GM12878 (cell line): ENCODE measurements at regions of chr9 and their contacts with region 1.

Region 1: DNA sequence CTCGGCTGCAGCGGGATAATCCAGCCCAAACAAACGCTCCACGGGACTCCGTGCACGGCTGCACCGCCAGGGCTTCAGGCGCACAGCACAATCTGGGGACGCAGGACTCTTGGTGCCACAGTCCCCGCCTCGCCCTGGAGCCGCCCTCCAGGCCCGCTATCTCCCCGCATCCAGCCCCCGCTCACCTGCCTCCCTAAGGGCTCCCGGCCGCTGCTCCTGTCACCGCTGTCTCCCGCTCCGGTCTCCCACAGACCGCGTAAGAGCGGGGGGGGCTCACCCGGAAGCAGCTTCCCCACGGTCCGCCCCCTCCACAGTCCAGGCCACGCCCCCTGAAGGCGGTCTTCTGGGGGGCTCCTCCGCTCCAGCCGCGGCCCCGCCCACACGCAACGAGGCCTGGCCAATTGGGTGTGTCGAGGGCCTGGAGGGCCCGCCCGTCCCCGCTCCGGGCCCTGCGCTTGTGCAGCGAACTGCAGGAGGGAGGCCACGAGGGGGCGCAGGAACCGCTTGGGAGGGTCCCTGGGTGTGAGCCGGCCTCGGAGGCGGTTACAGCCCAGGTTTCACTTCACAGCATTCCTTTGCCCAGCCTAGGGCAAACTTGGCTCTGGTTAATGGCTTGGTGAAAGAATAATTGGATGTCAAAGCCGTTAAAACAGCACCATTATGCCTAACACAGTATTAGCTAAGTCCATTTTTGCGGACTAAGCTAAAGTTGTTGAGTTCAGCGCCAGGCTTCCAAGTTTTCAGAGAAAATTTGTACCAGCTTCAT is at the start of gene ALAD:
- DNase-seq: peak; percentile 87
- ATAC-seq: peak; percentile 100
- H3K4me3 ChIP-seq: peak within 1 kb of the TSS; percentile 86
- H3K27ac ChIP-seq: no peak within 1 kb of the TSS
- H3K4me1 ChIP-seq: no peaks in the 10 kb centered on the region
- H3K27me3 ChIP-seq: no peaks in the 10 kb centered on the region
- CTCF ChIP-seq: peak; percentile 95 to 99 (median 96)
- EP300 ChIP-seq: no peak
- POLR2A ChIP-seq: peak; percentile 80
- RAD21 ChIP-seq: peak; percentile 68
- polyA plus RNA-seq, gene ALAD: 2.4 to 3.9 TPM

Region 2: GRCh38 chr9:112233768-112234167 is 1167.4 kb before region 1 on chr9:
- CTCF ChIA-PET with region 1: no interaction called
- POLR2A ChIA-PET with region 1: no interaction called
- RAD21 ChIA-PET with region 1: no interaction called
- SMC1A ChIA-PET with region 1: no interaction called
- in situ Hi-C with region 1: no loop called
- intact Hi-C with region 1: no loop called
- DNase-seq: no peak
- ATAC-seq: no peak
- H3K4me3 ChIP-seq: no peak overlapping the region
- H3K27ac ChIP-seq: no peak overlapping the region
- H3K4me1 ChIP-seq: no peaks in the 10 kb centered on the region
- H3K27me3 ChIP-seq: no peaks in the 10 kb centered on the region
- CTCF ChIP-seq: no peak
- EP300 ChIP-seq: no peak
- POLR2A ChIP-seq: no peak
- RAD21 ChIP-seq: no peak

Region 3: GRCh38 chr9:113309204-113309813 is 91.9 kb before region 1 on chr9:
- CTCF ChIA-PET with region 1: interaction called, 18 read pairs
- POLR2A ChIA-PET with region 1: no interaction called
- RAD21 ChIA-PET with region 1: interaction called, 5 read pairs
- SMC1A ChIA-PET with region 1: interaction called, 14 read pairs
- in situ Hi-C with region 1: no loop called
- intact Hi-C with region 1: no loop called
- DNase-seq: no peak
- ATAC-seq: peak; percentile 65
- H3K4me3 ChIP-seq: no peak overlapping the region
- H3K27ac ChIP-seq: no peak overlapping the region
- H3K4me1 ChIP-seq: no peaks in the 10 kb centered on the region
- H3K27me3 ChIP-seq: no peaks in the 10 kb centered on the region
- CTCF ChIP-seq: peak; percentile 56 to 73 (median 62); a peak in 5 of 6 replicates
- EP300 ChIP-seq: no peak
- POLR2A ChIP-seq: no peak
- RAD21 ChIP-seq: peak; percentile 91

Region 4: GRCh38 chr9:113355040-113355596 is 46.1 kb before region 1 on chr9:
- CTCF ChIA-PET with region 1: interaction called, 18 read pairs
- POLR2A ChIA-PET with region 1: no interaction called
- RAD21 ChIA-PET with region 1: interaction called, 4 read pairs
- SMC1A ChIA-PET with region 1: interaction called, 7 read pairs
- in situ Hi-C with region 1: no loop called
- intact Hi-C with region 1: no loop called
- DNase-seq: no peak
- ATAC-seq: peak; percentile 55
- H3K4me3 ChIP-seq: no peak overlapping the region
- H3K27ac ChIP-seq: no peak overlapping the region
- H3K4me1 ChIP-seq: peaks cover 14% of the 10 kb centered on the region
- H3K27me3 ChIP-seq: no peaks in the 10 kb centered on the region; a peak in 1 of 4 replicates
- CTCF ChIP-seq: peak; percentile 28 to 46 (median 45); a peak in 4 of 6 replicates
- EP300 ChIP-seq: no peak
- POLR2A ChIP-seq: no peak
- RAD21 ChIP-seq: peak; percentile 42; the same call in 1 of the 2 replicates

Region 5: GRCh38 chr9:113416149-113416721 is 15.0 kb after region 1 on chr9:
- CTCF ChIA-PET with region 1: interaction called, 13 read pairs
- POLR2A ChIA-PET with region 1: interaction called, 3 read pairs
- RAD21 ChIA-PET with region 1: interaction called, 3 read pairs
- SMC1A ChIA-PET with region 1: interaction called, 7 read pairs
- in situ Hi-C with region 1: no loop called
- intact Hi-C with region 1: no loop called
- DNase-seq: peak; percentile 67
- ATAC-seq: peak; percentile 99
- H3K4me3 ChIP-seq: no peak overlapping the region
- H3K27ac ChIP-seq: peak overlapping the region; percentile 69
- H3K4me1 ChIP-seq: peaks cover 19% of the 10 kb centered on the region; the same call in 1 of the 2 replicates
- H3K27me3 ChIP-seq: no peaks in the 10 kb centered on the region
- CTCF ChIP-seq: no peak
- EP300 ChIP-seq: 0 out of 4 replicates have a peak, but pooled peaks of 1 of the 2 experiments have one; percentile 45
- POLR2A ChIP-seq: peak; percentile 66
- RAD21 ChIP-seq: no peak

Region 6: GRCh38 chr9:113436728-113437471 is 35.7 kb after region 1 on chr9:
- CTCF ChIA-PET with region 1: no interaction called
- POLR2A ChIA-PET with region 1: no interaction called
- RAD21 ChIA-PET with region 1: no interaction called
- SMC1A ChIA-PET with region 1: no interaction called
- in situ Hi-C with region 1: no loop called
- intact Hi-C with region 1: no loop called
- DNase-seq: no peak
- ATAC-seq: no peak
- H3K4me3 ChIP-seq: no peak overlapping the region
- H3K27ac ChIP-seq: no peak overlapping the region
- H3K4me1 ChIP-seq: no peaks in the 10 kb centered on the region
- H3K27me3 ChIP-seq: no peaks in the 10 kb centered on the region
- CTCF ChIP-seq: no peak
- EP300 ChIP-seq: no peak
- POLR2A ChIP-seq: no peak
- RAD21 ChIP-seq: no peak

Region 7: GRCh38 chr9:114452219-114453165 is 1051.3 kb after region 1 on chr9:
- CTCF ChIA-PET with region 1: no interaction called
- POLR2A ChIA-PET with region 1: no interaction called
- RAD21 ChIA-PET with region 1: no interaction called
- SMC1A ChIA-PET with region 1: no interaction called
- in situ Hi-C with region 1: no loop called
- intact Hi-C with region 1: loop called (anchors 10 kb)
- DNase-seq: no peak
- ATAC-seq: peak; percentile 49
- H3K4me3 ChIP-seq: no peak overlapping the region
- H3K27ac ChIP-seq: no peak overlapping the region
- H3K4me1 ChIP-seq: peaks cover 17% of the 10 kb centered on the region
- H3K27me3 ChIP-seq: no peaks in the 10 kb centered on the region; a peak in 1 of 4 replicates
- CTCF ChIP-seq: no peak
- EP300 ChIP-seq: no peak
- POLR2A ChIP-seq: no peak
- RAD21 ChIP-seq: no peak